CD14-positive monocyte (primary cell): ENCODE measurements at regions of chr7 and their contacts with region 1.

Region 1: DNA sequence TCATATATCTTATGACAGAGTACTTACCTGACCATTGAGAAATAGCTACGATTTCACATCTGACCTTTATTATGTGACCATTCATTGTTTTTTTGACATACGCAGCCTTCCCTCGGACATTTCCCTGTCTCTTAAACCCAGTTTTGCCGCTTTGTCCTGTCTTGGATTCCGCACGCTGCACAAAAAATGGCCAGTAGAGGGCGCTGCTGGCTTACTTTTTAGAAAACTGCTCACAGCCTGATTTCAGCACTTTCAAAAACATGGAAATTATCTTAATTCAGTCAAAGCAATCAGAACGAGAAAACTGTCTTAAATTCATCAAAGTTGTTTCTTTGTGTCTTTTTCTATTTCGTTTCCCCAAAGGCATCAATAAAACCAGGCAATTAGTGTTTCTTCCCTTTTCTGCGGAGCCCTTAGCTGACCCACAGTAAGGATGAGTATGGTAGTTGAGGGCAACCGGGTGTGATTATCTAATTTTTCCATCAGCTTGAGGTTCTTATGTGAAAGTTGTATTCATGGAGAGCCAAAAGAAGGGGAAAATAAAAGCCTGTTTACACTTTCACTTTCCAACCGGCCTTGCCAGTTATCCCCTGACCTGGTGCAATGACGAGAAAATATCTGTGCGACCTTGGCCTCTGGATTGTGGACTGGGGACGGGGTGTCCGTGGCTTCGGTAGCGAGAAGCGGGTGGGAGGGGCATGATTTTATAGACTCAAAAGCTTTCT is 144.4 kb downstream of the DYNC1I1 start:
- DNase-seq: peak; percentile 32 to 55 (median 42)
- H3K4me3 ChIP-seq: no peak overlapping the region
- H3K4me3 Mint-ChIP-seq: peak overlapping the region in 1 of 2 donors; percentile 77
- H3K27ac ChIP-seq: no peak overlapping the region
- H3K27ac Mint-ChIP-seq: no peak overlapping the region
- H3K4me1 ChIP-seq: no peaks in the 10 kb centered on the region
- H3K4me1 Mint-ChIP-seq: peaks cover 3% of the 10 kb centered on the region
- H3K27me3 ChIP-seq: peaks cover 9 to 13% of the 10 kb centered on the region in 2 donors
- H3K27me3 Mint-ChIP-seq: peaks cover 10 to 16% (median 12%) of the 10 kb centered on the region in 3 donors
- CTCF ChIP-seq: peak; percentile 90

Region 2: DNA sequence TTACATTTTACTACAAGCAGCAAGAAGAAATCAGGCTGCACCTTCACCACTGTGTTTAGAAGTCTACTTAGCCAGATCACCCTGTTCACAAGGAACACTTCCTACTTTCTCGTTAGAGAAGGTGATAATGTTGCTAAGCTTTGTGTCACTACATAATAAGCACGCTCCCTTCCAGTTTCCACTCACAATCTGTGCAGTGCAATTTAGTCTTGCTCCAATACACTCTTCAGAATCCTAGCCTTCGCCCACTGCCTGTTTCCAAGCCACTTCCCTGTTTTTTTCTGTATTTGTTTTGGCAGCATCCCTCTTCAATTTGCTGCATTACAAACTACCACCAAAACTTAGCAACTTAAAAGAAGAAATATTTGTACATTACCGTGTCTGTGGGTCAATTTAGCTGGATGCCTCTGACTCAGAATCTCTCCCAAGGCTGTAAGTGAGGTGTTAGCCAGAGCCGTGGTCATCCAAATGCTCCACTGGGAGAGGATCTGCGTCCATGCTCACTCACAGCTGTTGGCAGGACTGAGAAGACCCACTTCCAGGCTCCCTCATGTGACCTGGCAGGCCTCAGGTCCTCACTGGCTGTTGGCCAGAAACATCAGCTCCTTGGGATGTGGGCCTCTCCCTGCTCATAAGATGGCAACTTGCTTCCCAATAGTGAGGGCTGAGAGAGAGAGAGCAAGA is 702.8 kb before region 1 on chr7:
- intact Hi-C with region 1: no loop called
- DNase-seq: no peak
- H3K4me3 ChIP-seq: no peak overlapping the region
- H3K4me3 Mint-ChIP-seq: no peak overlapping the region
- H3K27ac ChIP-seq: no peak overlapping the region
- H3K27ac Mint-ChIP-seq: no peak overlapping the region
- H3K4me1 ChIP-seq: no peaks in the 10 kb centered on the region
- H3K4me1 Mint-ChIP-seq: no peaks in the 10 kb centered on the region
- H3K27me3 ChIP-seq: no peaks in the 10 kb centered on the region
- H3K27me3 Mint-ChIP-seq: peaks cover 0 to 2% (median 0%) of the 10 kb centered on the region in 3 donors
- CTCF ChIP-seq: no peak

Region 3: DNA sequence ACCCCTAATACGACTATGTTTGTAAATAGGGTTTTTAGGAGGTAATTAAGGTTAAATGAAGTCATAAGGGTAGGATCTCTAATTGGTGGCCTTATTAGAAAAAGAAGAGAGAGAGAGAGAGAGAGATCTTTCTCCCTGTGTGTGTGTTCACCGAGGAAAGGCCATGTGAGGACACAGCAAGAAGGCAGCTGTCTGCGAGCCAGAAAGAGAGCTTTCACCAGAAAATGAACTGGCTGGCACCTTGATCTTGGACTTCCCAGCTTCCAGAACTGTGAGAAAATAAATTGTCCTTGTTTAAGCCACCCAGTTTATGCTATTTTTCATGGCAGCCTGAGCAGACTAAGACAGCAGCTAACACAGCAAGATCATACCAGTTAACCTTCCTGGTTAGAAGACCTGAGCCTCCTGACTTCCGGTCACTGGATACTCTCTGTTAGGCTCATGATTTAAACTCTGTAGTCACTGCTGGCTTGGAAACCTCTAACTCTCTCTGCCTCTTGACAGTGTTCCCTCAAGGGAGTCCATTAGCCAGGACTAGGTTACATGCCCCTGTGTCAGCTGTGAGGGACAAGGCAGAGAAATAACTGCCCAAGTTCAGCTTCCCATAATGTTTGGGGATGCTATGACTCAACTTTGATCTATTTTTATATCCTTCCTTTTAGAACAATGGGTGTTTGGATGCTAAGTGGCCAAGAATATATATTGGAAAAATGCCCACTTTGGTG is 42.0 kb before region 1 on chr7:
- intact Hi-C with region 1: no loop called
- DNase-seq: no peak
- H3K4me3 ChIP-seq: no peak overlapping the region
- H3K4me3 Mint-ChIP-seq: no peak overlapping the region
- H3K27ac ChIP-seq: no peak overlapping the region
- H3K27ac Mint-ChIP-seq: no peak overlapping the region
- H3K4me1 ChIP-seq: no peaks in the 10 kb centered on the region
- H3K4me1 Mint-ChIP-seq: no peaks in the 10 kb centered on the region
- H3K27me3 ChIP-seq: no peaks in the 10 kb centered on the region
- H3K27me3 Mint-ChIP-seq: peaks cover 0 to 5% (median 1%) of the 10 kb centered on the region in 3 donors
- CTCF ChIP-seq: no peak

Region 4: GRCh38 chr7:95897557-95898251 is 19.0 kb before region 1 on chr7:
- intact Hi-C with region 1: no loop called
- DNase-seq: no peak
- H3K4me3 ChIP-seq: no peak overlapping the region
- H3K4me3 Mint-ChIP-seq: no peak overlapping the region
- H3K27ac ChIP-seq: no peak overlapping the region
- H3K27ac Mint-ChIP-seq: no peak overlapping the region
- H3K4me1 ChIP-seq: peaks cover 8 to 12% of the 10 kb centered on the region in 2 donors
- H3K4me1 Mint-ChIP-seq: peaks cover 12% of the 10 kb centered on the region
- H3K27me3 ChIP-seq: peaks cover 44 to 47% of the 10 kb centered on the region in 2 donors
- H3K27me3 Mint-ChIP-seq: peaks cover 28 to 63% (median 28%) of the 10 kb centered on the region in 3 donors
- CTCF ChIP-seq: no peak

Region 5: DNA sequence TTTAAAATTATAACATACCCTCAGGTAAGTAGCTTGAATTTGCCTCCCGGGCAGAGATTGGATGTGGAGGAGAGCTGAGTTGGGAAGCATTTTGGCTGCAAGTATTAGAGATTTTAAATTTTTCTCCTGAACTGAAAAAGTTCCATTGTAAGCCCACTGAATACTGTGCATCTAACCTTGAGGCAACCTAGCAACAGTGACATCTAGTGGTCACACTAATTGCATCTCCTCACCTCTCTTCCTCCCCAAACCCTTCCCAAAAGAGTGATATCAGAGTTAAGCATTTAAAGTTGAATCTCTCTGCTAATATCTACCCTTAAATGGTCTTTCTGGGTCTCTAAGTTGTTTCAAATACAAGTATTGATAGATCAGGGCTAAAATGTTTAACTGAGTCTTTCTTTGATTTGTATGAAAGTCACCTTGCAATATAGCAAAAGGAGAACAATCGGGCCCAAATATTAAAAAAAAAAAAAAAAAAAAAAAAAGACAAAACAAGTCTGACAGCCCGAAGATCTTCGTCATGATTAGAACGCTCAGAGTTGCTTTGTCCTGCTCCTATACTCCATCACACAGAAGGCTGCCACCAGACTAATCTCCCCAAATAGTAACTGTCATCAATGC is 1148.3 kb after region 1 on chr7:
- intact Hi-C with region 1: loop called (anchors 5 to 10 kb)
- DNase-seq: peak; percentile 4 to 15 (median 12)
- H3K4me3 ChIP-seq: no peak overlapping the region
- H3K4me3 Mint-ChIP-seq: no peak overlapping the region
- H3K27ac ChIP-seq: no peak overlapping the region
- H3K27ac Mint-ChIP-seq: no peak overlapping the region
- H3K4me1 ChIP-seq: no peaks in the 10 kb centered on the region
- H3K4me1 Mint-ChIP-seq: no peaks in the 10 kb centered on the region
- H3K27me3 ChIP-seq: no peaks in the 10 kb centered on the region
- H3K27me3 Mint-ChIP-seq: peaks cover 0 to 2% (median 1%) of the 10 kb centered on the region in 3 donors
- CTCF ChIP-seq: peak; percentile 74